Endothelial cell of umbilical vein (primary cell): ENCODE measurements at regions of chr17 and their contacts with region 1.

Region 1: DNA sequence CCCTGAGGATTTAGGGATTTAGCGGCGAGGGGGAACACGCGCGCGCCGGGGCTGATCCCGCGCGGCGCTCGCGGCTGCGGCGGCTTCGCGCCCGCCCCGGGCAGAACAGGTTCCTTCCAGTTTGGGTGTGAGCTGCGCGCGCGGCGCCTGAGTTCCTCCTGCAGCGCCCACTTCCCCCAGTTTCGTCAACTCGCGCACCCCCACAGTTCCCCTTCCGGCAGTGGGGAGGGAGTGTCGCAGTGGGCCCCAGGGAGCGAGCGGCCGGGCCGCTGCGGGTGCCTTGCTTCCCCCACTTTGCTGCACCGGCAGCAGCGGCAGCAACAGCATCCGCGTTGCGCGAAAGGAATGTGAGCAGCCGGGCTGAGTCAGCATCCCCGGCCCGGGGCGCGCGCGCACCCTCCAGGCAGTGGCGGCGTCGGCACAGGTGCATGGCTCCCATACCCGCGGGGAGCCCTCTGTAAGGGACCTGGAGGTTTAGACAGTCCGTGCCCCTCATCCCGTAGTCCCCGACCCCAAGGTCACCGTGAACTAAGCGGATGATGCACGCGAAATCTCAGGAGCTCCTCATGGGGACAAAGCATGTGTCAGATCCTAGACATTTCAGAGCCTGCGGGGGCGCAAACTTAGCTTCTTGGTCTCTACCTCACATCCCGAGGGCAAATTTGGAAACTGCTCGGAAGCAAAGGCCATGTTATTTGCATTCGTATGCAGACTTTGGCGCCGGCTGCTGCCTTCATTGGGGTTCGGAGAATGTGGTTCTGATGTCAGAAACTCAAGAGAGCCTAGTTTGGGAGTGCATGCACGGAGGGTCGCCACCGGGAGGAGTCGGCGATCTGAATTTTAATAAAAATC is 775 bp downstream of the ARSG start:
- DNase-seq: peak; percentile 74
- H3K4me3 ChIP-seq: peak overlapping the region; percentile 53 to 74 (median 66)
- H3K27ac ChIP-seq: peak overlapping the region; percentile 48
- H3K4me1 ChIP-seq: peaks cover 15% of the 10 kb centered on the region
- H3K27me3 ChIP-seq: no peaks in the 10 kb centered on the region
- CTCF ChIP-seq: peak; percentile 16 to 31
- POLR2A ChIP-seq: peak; percentile 57

Region 2: GRCh38 chr17:68383443-68384321 is 91.6 kb after region 1 on chr17:
- CTCF ChIA-PET with region 1: interaction called, 17 read pairs
- POLR2A ChIA-PET with region 1: no interaction called
- dilution Hi-C with region 1: no loop called
- intact Hi-C with region 1: loop called (anchors 1 kb)
- DNase-seq: peak; percentile 82
- H3K4me3 ChIP-seq: no peak overlapping the region
- H3K27ac ChIP-seq: peak overlapping the region; percentile 76
- H3K4me1 ChIP-seq: peaks cover 37% of the 10 kb centered on the region
- H3K27me3 ChIP-seq: no peaks in the 10 kb centered on the region
- CTCF ChIP-seq: no peak
- POLR2A ChIP-seq: peak; percentile 20